ENCODE measurements at regions of chr6 and their contacts with region 1.

Region 1: GRCh38 chr6:4018172-4018905 is 60.6 kb downstream of the FAM217A start:
- DNase-seq: peak; percentile 92
- ATAC-seq: peak; percentile 68
- H3K4me3 Mint-ChIP-seq: peak overlapping the region; percentile 95
- H3K27ac Mint-ChIP-seq: peak overlapping the region; percentile 99
- H3K4me1 Mint-ChIP-seq: peaks cover 68% of the 10 kb centered on the region
- H3K27me3 Mint-ChIP-seq: no peaks in the 10 kb centered on the region
- CTCF ChIP-seq: no peak

Region 2: GRCh38 chr6:2765166-2765895 is 1253.0 kb before region 1 on chr6 and contains the start of gene WRNIP1:
- CTCF ChIA-PET with region 1: no interaction called
- POLR2A ChIA-PET with region 1: interaction called, 3 read pairs
- intact Hi-C with region 1: loop called (anchors 2 kb)
- DNase-seq: peak; percentile 92
- ATAC-seq: peak; percentile 89
- H3K4me3 Mint-ChIP-seq: peak within 1 kb of the TSS; percentile 93
- H3K27ac Mint-ChIP-seq: peak within 1 kb of the TSS; percentile 99
- H3K4me1 Mint-ChIP-seq: peaks cover 39% of the 10 kb centered on the region
- H3K27me3 Mint-ChIP-seq: no peaks in the 10 kb centered on the region
- CTCF ChIP-seq: no peak
- total RNA-seq, gene WRNIP1: 31.6 and 31.9 TPM in 2 replicates

Region 3: DNA sequence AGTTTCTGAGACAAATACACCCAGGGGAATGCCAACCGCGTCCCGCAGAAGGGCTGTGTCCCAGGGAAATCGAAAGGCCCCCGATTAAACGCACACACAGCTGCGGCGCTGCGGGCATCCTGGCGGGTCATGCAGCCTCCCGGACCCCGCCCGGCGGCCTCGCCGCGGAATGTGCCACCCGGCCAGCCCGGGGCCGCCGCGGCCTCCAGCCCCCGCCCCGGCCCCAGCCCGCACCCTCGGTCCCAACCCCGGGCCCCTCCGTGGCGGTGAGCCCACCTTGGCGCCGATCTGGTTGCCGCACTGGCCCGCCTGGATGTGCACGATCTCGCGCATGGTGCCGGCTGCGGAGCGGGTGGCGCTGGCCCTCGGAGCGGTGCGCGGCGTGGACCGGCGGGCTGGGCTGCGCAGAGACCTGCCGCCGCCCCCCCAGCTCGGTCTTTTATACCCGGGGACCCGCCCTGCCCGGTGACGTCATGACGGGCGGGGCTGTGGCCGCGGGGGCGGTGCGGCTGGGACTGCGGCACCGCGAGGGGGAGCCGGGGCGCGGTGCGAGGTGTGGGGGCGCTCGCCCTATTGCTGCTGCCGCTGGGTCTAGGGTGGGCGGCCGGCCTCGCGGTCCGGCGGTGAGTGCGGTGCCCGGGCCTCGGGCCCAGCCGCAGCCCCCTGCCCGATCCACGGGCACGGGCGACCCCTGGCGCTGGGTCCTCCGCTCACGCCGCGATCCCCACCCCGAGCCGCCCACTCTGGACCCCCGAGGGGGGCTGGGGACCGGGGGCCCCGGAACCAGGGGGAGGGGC is 861.0 kb before region 1 on chr6 and contains the start of gene TUBB2A:
- CTCF ChIA-PET with region 1: no interaction called
- POLR2A ChIA-PET with region 1: interaction called, 3 read pairs
- intact Hi-C with region 1: loop called (anchors 1 kb)
- DNase-seq: peak; percentile 91
- ATAC-seq: peak; percentile 89
- H3K4me3 Mint-ChIP-seq: peak within 1 kb of the TSS; percentile 85
- H3K27ac Mint-ChIP-seq: peak within 1 kb of the TSS; percentile 83
- H3K4me1 Mint-ChIP-seq: peaks cover 31% of the 10 kb centered on the region
- H3K27me3 Mint-ChIP-seq: peaks cover 3% of the 10 kb centered on the region
- CTCF ChIP-seq: no peak
- total RNA-seq, gene TUBB2A: 3.3 TPM in 2 replicates

Region 4: GRCh38 chr6:3742426-3743344 is 275.7 kb before region 1 on chr6:
- CTCF ChIA-PET with region 1: interaction called, 7 read pairs
- POLR2A ChIA-PET with region 1: interaction called, 24 read pairs
- intact Hi-C with region 1: loop called (anchors 1 kb)
- DNase-seq: peak; percentile 88
- ATAC-seq: peak; percentile 26
- H3K4me3 Mint-ChIP-seq: peak overlapping the region; percentile 59
- H3K27ac Mint-ChIP-seq: peak overlapping the region; percentile 76
- H3K4me1 Mint-ChIP-seq: peaks cover 48% of the 10 kb centered on the region
- H3K27me3 Mint-ChIP-seq: no peaks in the 10 kb centered on the region
- CTCF ChIP-seq: peak; percentile 55

Region 5: DNA sequence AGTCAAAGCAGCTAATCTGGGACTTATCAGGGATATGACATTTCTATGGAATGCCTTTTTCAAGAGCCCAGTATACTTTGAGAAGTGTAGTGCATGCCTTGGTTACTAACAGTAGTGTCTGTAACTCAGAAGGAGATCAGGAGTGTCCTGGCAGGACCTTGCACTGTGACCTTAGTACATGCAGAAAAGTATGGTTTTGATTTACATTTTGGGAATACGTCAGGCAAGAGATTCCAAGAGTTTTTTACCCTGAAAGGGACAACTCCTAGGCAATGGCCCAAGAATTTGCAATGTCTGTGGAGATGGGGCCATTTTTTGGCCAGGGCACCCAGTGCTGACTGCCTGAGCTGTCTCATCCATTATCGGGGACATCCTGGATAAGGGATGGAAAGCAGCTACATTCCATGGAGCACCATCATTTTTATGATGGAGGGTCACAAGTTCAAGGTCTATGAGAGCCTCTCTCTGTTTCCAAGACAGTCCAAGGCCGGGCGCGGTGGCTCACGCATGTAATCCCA is 89.0 kb before region 1 on chr6:
- CTCF ChIA-PET with region 1: no interaction called
- POLR2A ChIA-PET with region 1: no interaction called
- intact Hi-C with region 1: loop called (anchors 5 kb)
- DNase-seq: no peak
- ATAC-seq: no peak
- H3K4me3 Mint-ChIP-seq: no peak overlapping the region
- H3K27ac Mint-ChIP-seq: no peak overlapping the region
- H3K4me1 Mint-ChIP-seq: no peaks in the 10 kb centered on the region
- H3K27me3 Mint-ChIP-seq: peaks cover 2% of the 10 kb centered on the region
- CTCF ChIP-seq: no peak

Region 6: GRCh38 chr6:4135665-4136353 is 117.5 kb after region 1 on chr6:
- CTCF ChIA-PET with region 1: interaction called, 3 read pairs
- POLR2A ChIA-PET with region 1: interaction called, 23 read pairs
- intact Hi-C with region 1: loop called (anchors 1 kb)
- DNase-seq: peak; percentile 83
- ATAC-seq: peak; percentile 92
- H3K4me3 Mint-ChIP-seq: peak overlapping the region; percentile 85
- H3K27ac Mint-ChIP-seq: peak overlapping the region; percentile 76
- H3K4me1 Mint-ChIP-seq: peaks cover 27% of the 10 kb centered on the region
- H3K27me3 Mint-ChIP-seq: no peaks in the 10 kb centered on the region
- CTCF ChIP-seq: no peak

Region 7: GRCh38 chr6:5003604-5004372 is 985.4 kb after region 1 on chr6 and contains the start of gene RPP40:
- CTCF ChIA-PET with region 1: no interaction called
- POLR2A ChIA-PET with region 1: interaction called, 6 read pairs
- intact Hi-C with region 1: loop called (anchors 1 kb)
- DNase-seq: peak; percentile 98
- ATAC-seq: peak; percentile 94
- H3K4me3 Mint-ChIP-seq: peak within 1 kb of the TSS; percentile 94
- H3K27ac Mint-ChIP-seq: peak within 1 kb of the TSS; percentile 98
- H3K4me1 Mint-ChIP-seq: peaks cover 13% of the 10 kb centered on the region
- H3K27me3 Mint-ChIP-seq: no peaks in the 10 kb centered on the region
- CTCF ChIP-seq: no peak
- total RNA-seq, gene RPP40: 5.9 and 7.1 TPM in 2 replicates